GM12878 (cell line): ENCODE measurements at regions of chr3 and their contacts with region 1.

Region 1: GRCh38 chr3:90035643-90036042 is 928.2 kb downstream of the EPHA3 start:
- DNase-seq: no peak
- ATAC-seq: peak; percentile 80
- H3K4me3 ChIP-seq: no peak overlapping the region
- H3K27ac ChIP-seq: no peak overlapping the region
- H3K4me1 ChIP-seq: no peaks in the 10 kb centered on the region
- H3K27me3 ChIP-seq: no peaks in the 10 kb centered on the region
- CTCF ChIP-seq: no peak
- EP300 ChIP-seq: peak; percentile 77 to 84; a peak in 2 of 4 replicates
- POLR2A ChIP-seq: no peak
- RAD21 ChIP-seq: no peak

Region 2: DNA sequence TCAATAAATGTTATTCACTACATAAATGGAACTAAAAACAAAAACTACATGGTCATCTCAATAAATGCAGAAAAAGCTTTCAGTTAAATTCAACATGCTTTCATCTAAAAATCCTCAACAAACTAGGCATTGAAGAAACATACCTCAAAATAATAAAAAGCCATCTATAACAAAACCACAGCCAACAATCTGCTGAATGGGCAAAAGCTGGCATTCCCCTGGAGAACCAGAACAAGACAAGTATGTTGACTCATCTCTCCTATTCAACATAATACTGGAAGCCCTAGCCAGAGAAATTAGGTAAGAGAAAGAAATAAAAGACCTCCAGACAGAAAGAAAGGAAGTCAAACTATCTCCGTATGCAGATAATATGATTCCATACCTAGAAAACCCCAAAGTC is 168.4 kb before region 1 on chr3:
- CTCF ChIA-PET with region 1: no interaction called
- POLR2A ChIA-PET with region 1: no interaction called
- RAD21 ChIA-PET with region 1: no interaction called
- SMC1A ChIA-PET with region 1: no interaction called
- in situ Hi-C with region 1: no loop called
- intact Hi-C with region 1: no loop called
- DNase-seq: no peak
- ATAC-seq: no peak
- H3K4me3 ChIP-seq: no peak overlapping the region
- H3K27ac ChIP-seq: no peak overlapping the region
- H3K4me1 ChIP-seq: no peaks in the 10 kb centered on the region
- H3K27me3 ChIP-seq: no peaks in the 10 kb centered on the region
- CTCF ChIP-seq: no peak
- EP300 ChIP-seq: no peak
- POLR2A ChIP-seq: no peak
- RAD21 ChIP-seq: no peak

Region 3: GRCh38 chr3:90025005-90025404 is 10.6 kb before region 1 on chr3:
- CTCF ChIA-PET with region 1: interaction called, 5 read pairs
- POLR2A ChIA-PET with region 1: interaction called, 9 read pairs
- RAD21 ChIA-PET with region 1: interaction called, 8 read pairs
- SMC1A ChIA-PET with region 1: interaction called, 41 read pairs
- in situ Hi-C with region 1: no loop called
- intact Hi-C with region 1: no loop called
- DNase-seq: no peak
- ATAC-seq: no peak; the same call in 2 of the 3 replicates
- H3K4me3 ChIP-seq: no peak overlapping the region
- H3K27ac ChIP-seq: no peak overlapping the region
- H3K4me1 ChIP-seq: no peaks in the 10 kb centered on the region
- H3K27me3 ChIP-seq: no peaks in the 10 kb centered on the region
- CTCF ChIP-seq: no peak
- EP300 ChIP-seq: no peak
- POLR2A ChIP-seq: no peak
- RAD21 ChIP-seq: no peak

Region 4: DNA sequence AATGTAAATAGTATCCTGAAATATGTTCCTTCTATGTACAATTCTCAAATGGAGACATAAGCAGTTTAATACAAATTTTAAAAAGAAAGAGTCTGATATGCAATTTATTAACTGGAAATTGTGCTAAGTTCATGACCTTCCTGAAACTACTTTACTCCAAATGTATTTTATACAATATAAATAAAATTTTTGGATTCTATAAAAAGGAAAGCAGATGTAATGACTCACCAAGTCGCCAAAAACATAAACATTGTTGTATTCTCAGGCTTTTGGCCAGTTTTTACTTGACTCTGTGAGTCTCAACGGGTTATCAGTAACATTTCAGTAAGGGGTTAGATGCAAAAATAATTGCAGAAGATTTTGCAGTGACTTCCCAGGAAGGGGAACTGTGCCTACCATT is 20.0 kb after region 1 on chr3:
- CTCF ChIA-PET with region 1: interaction called, 10 read pairs
- POLR2A ChIA-PET with region 1: interaction called, 6 read pairs
- RAD21 ChIA-PET with region 1: interaction called, 21 read pairs
- SMC1A ChIA-PET with region 1: interaction called, 46 read pairs
- in situ Hi-C with region 1: no loop called
- intact Hi-C with region 1: no loop called
- DNase-seq: no peak
- ATAC-seq: peak; percentile 12; the same call in 1 of the 3 replicates
- H3K4me3 ChIP-seq: no peak overlapping the region
- H3K27ac ChIP-seq: no peak overlapping the region
- H3K4me1 ChIP-seq: no peaks in the 10 kb centered on the region
- H3K27me3 ChIP-seq: no peaks in the 10 kb centered on the region
- CTCF ChIP-seq: no peak
- EP300 ChIP-seq: no peak
- POLR2A ChIP-seq: no peak
- RAD21 ChIP-seq: no peak

Region 5: DNA sequence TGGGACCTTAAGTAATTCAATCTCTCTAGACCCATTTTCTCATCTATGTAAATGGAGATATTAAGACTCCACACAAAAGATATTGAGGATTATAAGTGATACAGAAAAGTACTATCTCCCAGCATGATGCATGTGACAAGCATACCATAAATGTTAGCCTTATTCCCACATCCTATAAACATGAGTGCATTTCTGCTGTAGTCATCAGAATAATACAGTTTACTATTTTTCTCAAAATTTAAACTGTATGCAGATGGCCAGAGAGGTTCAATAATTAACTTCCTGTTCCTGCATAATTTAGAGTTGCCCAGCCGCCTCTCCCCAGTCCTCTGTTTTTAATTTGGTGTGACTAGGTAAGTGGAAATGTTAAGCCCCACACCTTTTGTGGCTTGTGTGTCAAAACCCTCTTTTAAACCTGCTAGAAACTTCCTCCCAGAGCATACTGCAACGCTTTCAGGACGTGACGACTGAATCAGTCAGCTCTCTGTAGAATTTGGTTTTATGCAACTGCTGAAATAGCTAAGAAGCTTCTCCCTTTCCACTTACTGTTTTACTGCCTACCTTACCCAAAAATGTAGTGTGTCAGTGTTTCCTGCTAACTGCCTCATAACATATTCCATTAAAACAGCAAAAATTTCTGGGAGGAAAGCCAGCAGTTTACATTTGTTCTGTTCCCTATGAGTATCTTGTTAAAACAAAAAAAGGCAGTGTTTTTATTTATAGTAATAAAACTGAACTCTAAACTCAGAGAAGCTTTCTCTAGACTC is 109.6 kb after region 1 on chr3:
- CTCF ChIA-PET with region 1: no interaction called
- POLR2A ChIA-PET with region 1: no interaction called
- RAD21 ChIA-PET with region 1: no interaction called
- SMC1A ChIA-PET with region 1: no interaction called
- in situ Hi-C with region 1: no loop called
- intact Hi-C with region 1: no loop called
- DNase-seq: no peak
- ATAC-seq: no peak
- H3K4me3 ChIP-seq: no peak overlapping the region
- H3K27ac ChIP-seq: no peak overlapping the region
- H3K4me1 ChIP-seq: no peaks in the 10 kb centered on the region
- H3K27me3 ChIP-seq: no peaks in the 10 kb centered on the region
- CTCF ChIP-seq: no peak
- EP300 ChIP-seq: no peak
- POLR2A ChIP-seq: no peak
- RAD21 ChIP-seq: no peak